ENCODE measurements at regions of chr6 and their contacts with region 1.

Region 1: DNA sequence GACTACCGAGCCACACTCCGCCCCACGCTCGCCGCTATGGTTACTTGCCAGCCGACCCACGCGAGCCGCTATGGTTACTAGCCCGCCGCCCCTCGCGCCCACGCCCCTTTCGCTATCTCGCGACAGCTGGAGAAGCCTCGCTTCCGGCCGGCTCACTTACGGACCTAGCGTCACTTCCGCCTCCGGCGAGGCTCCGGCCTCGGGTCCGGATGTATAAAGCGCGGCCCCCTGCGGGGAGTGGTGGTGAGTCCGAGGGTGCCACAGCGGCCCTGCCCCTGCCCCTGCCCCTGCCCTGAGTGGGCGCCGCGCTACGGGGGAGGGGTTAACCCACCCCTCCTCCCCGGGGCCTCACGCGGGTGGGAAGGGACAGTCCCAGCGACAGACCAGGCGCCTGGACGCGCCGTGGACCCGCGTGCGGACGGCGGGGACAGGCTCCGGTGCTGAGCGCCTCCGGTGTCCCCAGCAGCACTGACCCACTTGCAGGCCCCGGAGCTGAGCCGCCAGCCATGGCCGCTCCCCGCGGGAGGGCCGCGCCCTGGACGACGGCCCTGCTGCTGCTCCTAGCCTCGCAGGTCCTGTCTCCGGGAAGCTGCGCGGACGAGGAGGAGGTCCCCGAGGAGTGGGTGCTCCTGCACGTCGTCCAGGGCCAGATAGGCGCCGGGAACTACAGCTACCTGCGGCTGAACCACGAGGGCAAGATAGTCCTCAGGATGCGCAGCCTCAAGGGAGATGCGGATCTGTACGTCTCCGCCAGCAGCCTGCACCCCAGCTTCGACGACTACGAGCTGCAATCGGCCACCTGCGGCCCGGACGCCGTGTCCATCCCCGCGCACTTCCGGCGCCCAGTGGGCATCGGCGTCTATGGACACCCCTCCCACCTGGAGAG is at the starts of genes C6orf120 and WDR27:
- DNase-seq: peak; percentile 99
- ATAC-seq: peak; percentile 92
- H3K4me3 Mint-ChIP-seq: peak within 1 kb of the TSS; percentile 88
- H3K27ac Mint-ChIP-seq: peak within 1 kb of the TSS; percentile 88
- H3K4me1 Mint-ChIP-seq: peaks cover 37% of the 10 kb centered on the region
- H3K27me3 Mint-ChIP-seq: no peaks in the 10 kb centered on the region
- total RNA-seq, gene C6orf120: 14.7 to 15.6 TPM
- total RNA-seq, gene WDR27: 34.3 to 36.2 TPM

Region 2: DNA sequence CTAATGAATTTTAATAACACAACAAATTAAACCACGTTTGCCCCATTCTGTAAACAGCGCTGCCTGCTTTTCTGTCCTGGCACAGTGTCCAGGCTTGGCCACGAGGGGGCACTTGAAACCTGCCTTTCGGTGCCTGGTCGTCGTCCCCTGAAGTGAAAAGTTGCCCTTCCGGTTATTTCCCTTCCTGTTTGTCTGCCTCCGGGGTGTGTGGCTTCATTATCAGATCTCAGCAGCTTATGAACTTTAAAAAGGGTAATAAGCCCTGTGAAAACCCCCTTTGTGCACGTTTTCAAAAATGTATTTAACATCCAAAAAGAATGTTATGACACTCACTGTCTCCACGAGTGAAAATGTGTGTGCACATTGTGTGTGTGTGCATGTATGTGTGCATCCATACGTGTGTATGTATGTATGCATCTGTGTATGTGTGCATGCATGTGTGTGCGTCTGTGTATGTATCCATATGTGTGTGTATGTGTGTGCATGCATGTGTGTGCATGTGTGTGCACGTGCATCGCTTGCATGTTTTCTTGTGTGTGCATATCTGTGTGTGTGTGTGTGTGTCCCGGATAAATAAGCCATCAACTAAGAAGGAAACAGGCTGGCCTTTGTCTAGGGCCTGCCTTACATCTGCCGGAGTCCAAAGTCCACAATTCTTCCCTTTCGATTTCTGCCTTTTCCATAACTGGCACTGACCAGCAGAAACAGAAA is 806.9 kb before region 1 on chr6:
- CTCF ChIA-PET with region 1: no interaction called
- POLR2A ChIA-PET with region 1: no interaction called
- intact Hi-C with region 1: loop called in 1 of 2 experiments (anchors 2 kb)
- DNase-seq: peak; percentile 90
- ATAC-seq: peak; percentile 96
- H3K4me3 Mint-ChIP-seq: no peak overlapping the region
- H3K27ac Mint-ChIP-seq: peak overlapping the region; percentile 64
- H3K4me1 Mint-ChIP-seq: peaks cover 10% of the 10 kb centered on the region
- H3K27me3 Mint-ChIP-seq: no peaks in the 10 kb centered on the region

Region 3: DNA sequence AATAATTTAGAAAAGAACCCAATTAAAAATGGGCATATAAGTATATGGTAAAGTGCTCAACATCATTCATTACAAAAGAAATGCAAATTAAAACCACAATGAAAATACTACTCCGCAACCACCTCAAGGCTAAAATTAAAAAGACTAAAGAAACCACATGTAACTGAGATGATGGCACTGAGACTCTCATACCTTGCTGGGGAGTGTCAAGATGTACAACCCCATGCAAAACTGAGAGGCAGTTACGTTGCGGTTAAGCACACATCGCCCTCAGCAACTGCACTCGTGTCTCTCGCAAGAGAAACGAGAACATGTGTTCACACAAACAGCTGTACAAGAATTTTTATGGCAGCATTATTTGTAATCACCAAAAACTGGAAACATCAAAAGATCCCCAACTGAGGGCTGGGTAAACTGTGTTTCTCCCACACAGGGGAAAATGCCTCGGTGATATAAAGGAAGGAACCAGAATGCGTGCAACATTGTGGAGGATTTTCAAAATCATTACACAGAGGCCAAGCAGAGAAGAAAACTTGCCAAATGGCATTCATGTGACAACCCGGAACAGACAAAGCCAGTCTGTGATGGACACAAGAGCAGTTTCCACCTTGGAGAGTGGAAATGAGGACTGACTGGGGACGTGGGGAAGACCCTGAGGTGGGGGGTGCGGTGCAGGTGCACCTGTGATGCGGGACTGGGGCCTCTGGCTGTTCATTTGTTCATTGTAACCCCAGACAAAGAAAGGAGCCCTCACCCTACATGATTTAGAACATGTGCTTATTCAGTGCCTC is 145.2 kb before region 1 on chr6:
- CTCF ChIA-PET with region 1: no interaction called
- POLR2A ChIA-PET with region 1: no interaction called
- intact Hi-C with region 1: loop called in 1 of 2 experiments (anchors 2 kb)
- DNase-seq: peak; percentile 72
- ATAC-seq: peak; percentile 100
- H3K4me3 Mint-ChIP-seq: peak overlapping the region; percentile 7
- H3K27ac Mint-ChIP-seq: no peak overlapping the region
- H3K4me1 Mint-ChIP-seq: peaks cover 13% of the 10 kb centered on the region
- H3K27me3 Mint-ChIP-seq: peaks cover 30% of the 10 kb centered on the region

Region 4: GRCh38 chr6:169723200-169723909 is 21.2 kb after region 1 on chr6:
- CTCF ChIA-PET with region 1: interaction called, 60 read pairs
- POLR2A ChIA-PET with region 1: interaction called, 6 read pairs
- intact Hi-C with region 1: loop called (anchors 1 kb)
- DNase-seq: peak; percentile 80
- ATAC-seq: peak; percentile 33
- H3K4me3 Mint-ChIP-seq: peak overlapping the region; percentile 88
- H3K27ac Mint-ChIP-seq: peak overlapping the region; percentile 99
- H3K4me1 Mint-ChIP-seq: peaks cover 43% of the 10 kb centered on the region
- H3K27me3 Mint-ChIP-seq: no peaks in the 10 kb centered on the region

Region 5: GRCh38 chr6:169990095-169991030 is 288.2 kb after region 1 on chr6:
- CTCF ChIA-PET with region 1: no interaction called
- POLR2A ChIA-PET with region 1: no interaction called
- intact Hi-C with region 1: loop called in 1 of 2 experiments (anchors 1 kb)
- DNase-seq: peak; percentile 88
- ATAC-seq: peak; percentile 92
- H3K4me3 Mint-ChIP-seq: peak overlapping the region; percentile 58
- H3K27ac Mint-ChIP-seq: peak overlapping the region; percentile 91
- H3K4me1 Mint-ChIP-seq: peaks cover 33% of the 10 kb centered on the region
- H3K27me3 Mint-ChIP-seq: no peaks in the 10 kb centered on the region

Region 6: GRCh38 chr6:170048551-170049228 is 346.5 kb after region 1 on chr6:
- CTCF ChIA-PET with region 1: no interaction called
- POLR2A ChIA-PET with region 1: no interaction called
- intact Hi-C with region 1: no loop called
- DNase-seq: no peak
- ATAC-seq: peak; percentile 26
- H3K4me3 Mint-ChIP-seq: no peak overlapping the region
- H3K27ac Mint-ChIP-seq: no peak overlapping the region
- H3K4me1 Mint-ChIP-seq: no peaks in the 10 kb centered on the region
- H3K27me3 Mint-ChIP-seq: peaks cover 2% of the 10 kb centered on the region

Region 7: DNA sequence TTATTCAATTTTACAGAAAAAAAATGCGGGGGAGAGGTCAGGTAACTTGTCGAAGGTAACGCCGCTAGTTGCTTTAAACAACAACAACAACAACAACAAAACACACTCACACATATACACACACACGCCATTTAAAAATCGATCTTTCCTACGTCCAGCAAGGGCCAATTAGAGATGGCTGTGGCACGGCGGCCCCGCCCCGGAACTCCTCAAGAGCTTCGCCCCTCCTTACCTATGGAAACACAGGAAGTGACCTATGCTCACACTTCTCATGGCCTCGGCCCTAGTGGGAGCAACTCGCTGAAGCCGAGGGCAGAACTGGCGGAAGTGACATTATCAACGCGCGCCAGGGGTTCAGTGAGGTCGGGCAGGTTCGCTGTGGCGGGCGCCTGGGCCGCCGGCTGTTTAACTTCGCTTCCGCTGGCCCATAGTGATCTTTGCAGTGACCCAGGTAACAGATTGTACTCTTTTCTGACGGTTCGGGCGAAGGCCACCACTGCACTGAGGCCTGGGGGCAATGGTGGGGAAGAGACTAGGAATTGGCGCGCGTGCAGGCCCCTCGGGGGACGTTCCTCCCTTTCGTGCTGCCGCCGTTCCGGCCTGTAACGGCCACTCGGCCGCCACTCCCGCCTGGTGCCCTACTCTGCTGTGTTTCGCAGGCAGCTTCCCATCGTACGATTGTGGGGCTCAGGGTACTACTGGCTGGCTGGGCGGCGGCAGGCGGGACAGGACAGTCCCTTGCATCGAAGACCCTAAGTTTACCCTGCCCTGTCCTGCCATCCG is 852.0 kb after region 1 on chr6 and contains the start of gene TBP:
- CTCF ChIA-PET with region 1: no interaction called
- POLR2A ChIA-PET with region 1: no interaction called
- intact Hi-C with region 1: loop called (anchors 1 to 2 kb)
- DNase-seq: peak; percentile 98
- ATAC-seq: peak; percentile 96
- H3K4me3 Mint-ChIP-seq: no peak within 1 kb of the TSS
- H3K27ac Mint-ChIP-seq: no peak within 1 kb of the TSS
- H3K4me1 Mint-ChIP-seq: peaks cover 36% of the 10 kb centered on the region
- H3K27me3 Mint-ChIP-seq: no peaks in the 10 kb centered on the region
- total RNA-seq, gene TBP: 23.9 to 27.4 TPM